B cell (primary cell): ENCODE measurements at regions of chr7 and their contacts with region 1.

Region 1: GRCh38 chr7:151028131-151028947 is at the start of gene ABCB8:
- DNase-seq: peak; percentile 99
- ATAC-seq: peak; percentile 92
- H3K4me3 ChIP-seq: peak within 1 kb of the TSS; percentile 54 to 86 (median 78)
- H3K4me3 Mint-ChIP-seq: peak within 1 kb of the TSS; percentile 97
- H3K27ac ChIP-seq: peak within 1 kb of the TSS; percentile 95 to 96
- H3K27ac Mint-ChIP-seq: peak within 1 kb of the TSS; percentile 99
- H3K4me1 ChIP-seq: peaks cover 11 to 17% of the 10 kb centered on the region in 2 donors
- H3K4me1 Mint-ChIP-seq: peaks cover 23% of the 10 kb centered on the region
- H3K27me3 ChIP-seq: peaks cover 0 to 20% (median 7%) of the 10 kb centered on the region in 4 experiments
- H3K27me3 Mint-ChIP-seq: peaks cover 7% of the 10 kb centered on the region
- CTCF ChIP-seq: peak; percentile 25
- total RNA-seq, gene ABCB8: 64.7 and 69.7 TPM in 2 replicates

Region 2: GRCh38 chr7:149771721-149772240 is 1256.6 kb before region 1 on chr7:
- CTCF ChIA-PET with region 1: no interaction called
- POLR2A ChIA-PET with region 1: no interaction called
- intact Hi-C with region 1: loop called (anchors 5 kb)
- DNase-seq: peak; percentile 89
- ATAC-seq: peak; percentile 97
- H3K4me3 ChIP-seq: peak overlapping the region in 4 of 5 experiments; percentile 53 to 74 (median 64)
- H3K4me3 Mint-ChIP-seq: peak overlapping the region; percentile 78
- H3K27ac ChIP-seq: no peak overlapping the region
- H3K27ac Mint-ChIP-seq: no peak overlapping the region
- H3K4me1 ChIP-seq: peaks cover 7 to 19% of the 10 kb centered on the region in 2 donors
- H3K4me1 Mint-ChIP-seq: peaks cover 9% of the 10 kb centered on the region
- H3K27me3 ChIP-seq: peaks cover 0 to 19% (median 1%) of the 10 kb centered on the region in 4 experiments
- H3K27me3 Mint-ChIP-seq: peaks cover 10% of the 10 kb centered on the region
- CTCF ChIP-seq: no peak

Region 3: DNA sequence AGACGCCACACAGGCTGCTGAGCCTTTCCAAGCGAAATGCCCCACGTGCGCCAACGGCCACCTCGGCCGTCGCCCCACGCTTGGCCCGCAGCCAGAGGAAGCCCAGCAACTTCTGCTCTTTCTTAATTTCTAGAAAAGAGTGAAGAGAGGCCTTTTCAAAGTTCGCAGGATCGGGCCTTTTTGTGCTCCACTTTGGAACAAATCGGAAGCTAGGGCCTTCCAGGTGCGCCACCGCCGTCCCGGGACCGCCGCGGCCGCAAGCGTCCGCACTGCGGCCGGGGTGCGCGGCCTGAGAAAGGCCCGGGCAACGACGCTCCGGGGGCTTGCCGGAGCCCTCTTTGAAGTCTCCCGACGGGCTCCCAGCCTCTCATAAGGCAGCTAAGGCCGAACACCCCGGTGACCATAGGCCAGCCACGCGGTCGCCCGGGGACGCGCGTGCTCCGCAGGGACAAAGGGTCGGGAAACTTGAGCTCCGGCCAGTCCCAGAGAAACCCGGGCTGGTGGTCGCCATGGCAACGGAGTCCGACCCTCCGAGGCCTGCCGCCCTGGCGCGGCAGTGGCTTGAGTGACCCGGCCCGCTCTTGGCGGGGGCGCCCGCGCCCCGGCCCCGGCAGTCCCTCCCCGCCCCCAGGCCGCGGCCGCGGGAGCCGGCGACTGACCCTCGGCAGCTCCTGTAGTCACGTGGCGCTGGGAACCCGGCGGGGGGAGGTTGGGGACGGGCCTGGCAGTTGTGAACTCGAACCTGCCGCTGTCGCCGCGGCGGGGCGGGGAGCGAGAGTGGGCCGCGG is 660.0 kb before region 1 on chr7 and contains the start of gene REPIN1:
- CTCF ChIA-PET with region 1: no interaction called
- POLR2A ChIA-PET with region 1: no interaction called
- intact Hi-C with region 1: loop called (anchors 10 kb)
- DNase-seq: peak; percentile 89
- ATAC-seq: peak; percentile 49
- H3K4me3 ChIP-seq: peak within 1 kb of the TSS; percentile 62 to 98 (median 82)
- H3K4me3 Mint-ChIP-seq: peak within 1 kb of the TSS; percentile 92
- H3K27ac ChIP-seq: peak within 1 kb of the TSS; percentile 98 to 99
- H3K27ac Mint-ChIP-seq: peak within 1 kb of the TSS; percentile 98
- H3K4me1 ChIP-seq: peaks cover 57 to 72% of the 10 kb centered on the region in 2 donors
- H3K4me1 Mint-ChIP-seq: peaks cover 69% of the 10 kb centered on the region
- H3K27me3 ChIP-seq: no peaks in the 10 kb centered on the region
- H3K27me3 Mint-ChIP-seq: no peaks in the 10 kb centered on the region
- CTCF ChIP-seq: no peak
- total RNA-seq, gene REPIN1: 190 and 193 TPM in 2 replicates

Region 4: GRCh38 chr7:150378853-150379440 is 649.4 kb before region 1 on chr7 and contains the start of gene ZNF775:
- CTCF ChIA-PET with region 1: no interaction called
- POLR2A ChIA-PET with region 1: no interaction called
- intact Hi-C with region 1: loop called (anchors 1 kb)
- DNase-seq: peak; percentile 93
- ATAC-seq: peak; percentile 91
- H3K4me3 ChIP-seq: peak within 1 kb of the TSS; percentile 45 to 91 (median 77)
- H3K4me3 Mint-ChIP-seq: peak within 1 kb of the TSS; percentile 96
- H3K27ac ChIP-seq: peak within 1 kb of the TSS; percentile 84 to 85
- H3K27ac Mint-ChIP-seq: peak within 1 kb of the TSS; percentile 90
- H3K4me1 ChIP-seq: peaks cover 22 to 59% of the 10 kb centered on the region in 2 donors
- H3K4me1 Mint-ChIP-seq: peaks cover 71% of the 10 kb centered on the region
- H3K27me3 ChIP-seq: no peaks in the 10 kb centered on the region
- H3K27me3 Mint-ChIP-seq: no peaks in the 10 kb centered on the region
- CTCF ChIP-seq: peak; percentile 14
- total RNA-seq, gene ZNF775: 12.1 and 12.5 TPM in 2 replicates

Region 5: GRCh38 chr7:150675714-150676113 is 352.6 kb before region 1 on chr7:
- CTCF ChIA-PET with region 1: no interaction called
- POLR2A ChIA-PET with region 1: no interaction called
- intact Hi-C with region 1: no loop called
- DNase-seq: no peak
- ATAC-seq: no peak
- H3K4me3 ChIP-seq: no peak overlapping the region
- H3K4me3 Mint-ChIP-seq: no peak overlapping the region
- H3K27ac ChIP-seq: no peak overlapping the region
- H3K27ac Mint-ChIP-seq: no peak overlapping the region
- H3K4me1 ChIP-seq: peaks cover 7 to 14% of the 10 kb centered on the region in 2 donors
- H3K4me1 Mint-ChIP-seq: peaks cover 13% of the 10 kb centered on the region
- H3K27me3 ChIP-seq: no peaks in the 10 kb centered on the region
- H3K27me3 Mint-ChIP-seq: peaks cover 6% of the 10 kb centered on the region
- CTCF ChIP-seq: no peak

Region 6: DNA sequence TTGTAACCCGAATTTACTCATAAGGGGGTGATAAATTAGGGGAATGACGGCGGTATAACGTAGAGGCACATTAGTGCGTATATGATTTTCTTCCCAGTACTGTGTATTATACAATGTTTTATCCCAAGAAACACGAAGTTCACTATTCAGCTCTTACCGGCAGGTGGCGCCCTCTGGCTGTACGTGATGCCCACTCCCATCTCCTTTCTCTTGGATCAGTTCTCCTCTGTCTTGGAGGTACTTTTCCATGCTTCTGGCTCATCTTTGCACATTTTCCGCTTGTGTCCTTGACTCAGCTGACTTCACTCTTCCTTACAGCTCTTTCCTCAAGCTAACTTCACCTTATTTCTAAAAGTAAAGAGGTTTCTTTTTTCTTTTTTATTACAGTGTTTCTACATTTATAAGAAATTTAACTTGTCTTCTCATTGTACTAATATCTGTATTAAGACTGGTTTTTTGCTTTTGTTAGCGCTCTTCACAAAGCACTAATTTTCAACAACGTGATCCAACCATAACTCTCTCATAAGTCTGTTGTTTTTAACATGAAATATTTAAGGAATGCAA is 249.5 kb before region 1 on chr7:
- CTCF ChIA-PET with region 1: no interaction called
- POLR2A ChIA-PET with region 1: no interaction called
- intact Hi-C with region 1: no loop called
- DNase-seq: peak; percentile 70
- ATAC-seq: peak; percentile 49
- H3K4me3 ChIP-seq: no peak overlapping the region
- H3K4me3 Mint-ChIP-seq: no peak overlapping the region
- H3K27ac ChIP-seq: no peak overlapping the region
- H3K27ac Mint-ChIP-seq: no peak overlapping the region
- H3K4me1 ChIP-seq: no peaks in the 10 kb centered on the region
- H3K4me1 Mint-ChIP-seq: no peaks in the 10 kb centered on the region
- H3K27me3 ChIP-seq: no peaks in the 10 kb centered on the region
- H3K27me3 Mint-ChIP-seq: peaks cover 15% of the 10 kb centered on the region
- CTCF ChIP-seq: peak; percentile 98

Region 7: DNA sequence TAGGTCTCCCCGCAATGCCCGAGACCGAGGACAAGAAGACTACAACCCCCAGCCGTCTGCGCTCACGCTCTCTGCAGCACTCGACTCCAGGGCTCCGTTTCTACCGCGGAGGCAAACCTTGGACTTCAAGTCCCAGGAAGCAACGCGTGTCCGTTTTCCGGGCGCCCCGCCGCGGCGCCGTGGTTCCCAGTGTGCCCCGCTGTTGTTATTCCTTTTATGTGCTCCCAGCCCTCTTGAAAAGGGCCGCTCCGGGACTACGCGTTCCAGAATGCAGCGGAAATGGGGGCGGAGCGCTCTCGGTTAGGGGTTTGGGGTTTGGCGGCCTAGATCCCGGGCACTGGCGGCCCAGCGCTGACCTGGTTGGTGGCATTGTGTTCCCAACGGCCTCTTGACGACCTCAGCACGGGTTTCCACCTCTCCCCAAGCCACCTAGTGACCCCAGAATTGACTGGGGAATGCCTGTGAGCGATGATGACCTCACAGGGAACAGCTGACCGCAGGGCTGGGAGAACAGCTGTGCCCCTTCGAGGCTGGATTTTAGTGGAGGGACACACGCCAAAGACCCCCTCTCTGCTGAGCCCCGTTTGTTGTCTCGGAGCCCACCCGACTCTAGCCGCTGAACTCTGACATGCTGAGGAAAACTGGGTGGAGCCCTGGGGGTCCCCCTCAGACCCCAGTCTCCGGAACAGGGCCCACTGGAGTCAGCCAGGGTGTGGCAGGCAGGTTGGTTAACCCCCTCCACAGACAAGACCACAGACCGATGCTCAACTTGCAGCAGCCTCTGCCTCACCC is 29.8 kb after region 1 on chr7:
- CTCF ChIA-PET with region 1: interaction called, 3 read pairs
- POLR2A ChIA-PET with region 1: interaction called, 5 read pairs
- intact Hi-C with region 1: loop called (anchors 1 kb)
- DNase-seq: peak; percentile 98
- ATAC-seq: peak; percentile 92
- H3K4me3 ChIP-seq: peak overlapping the region; percentile 67 to 90 (median 73)
- H3K4me3 Mint-ChIP-seq: peak overlapping the region; percentile 96
- H3K27ac ChIP-seq: peak overlapping the region; percentile 79 to 82
- H3K27ac Mint-ChIP-seq: peak overlapping the region; percentile 94
- H3K4me1 ChIP-seq: peaks cover 23 to 40% of the 10 kb centered on the region in 2 donors
- H3K4me1 Mint-ChIP-seq: peaks cover 36% of the 10 kb centered on the region
- H3K27me3 ChIP-seq: no peaks in the 10 kb centered on the region
- H3K27me3 Mint-ChIP-seq: no peaks in the 10 kb centered on the region
- CTCF ChIP-seq: no peak

Region 8: GRCh38 chr7:151232091-151232916 is 204.0 kb after region 1 on chr7 and contains the start of gene CHPF2:
- CTCF ChIA-PET with region 1: no interaction called
- POLR2A ChIA-PET with region 1: no interaction called
- intact Hi-C with region 1: loop called (anchors 1 kb)
- DNase-seq: peak; percentile 91
- ATAC-seq: peak; percentile 94
- H3K4me3 ChIP-seq: peak within 1 kb of the TSS; percentile 64 to 96 (median 93)
- H3K4me3 Mint-ChIP-seq: peak within 1 kb of the TSS; percentile 99
- H3K27ac ChIP-seq: peak within 1 kb of the TSS; percentile 53 to 68
- H3K27ac Mint-ChIP-seq: peak within 1 kb of the TSS; percentile 97
- H3K4me1 ChIP-seq: peaks cover 22 to 30% of the 10 kb centered on the region in 2 donors
- H3K4me1 Mint-ChIP-seq: peaks cover 43% of the 10 kb centered on the region
- H3K27me3 ChIP-seq: no peaks in the 10 kb centered on the region
- H3K27me3 Mint-ChIP-seq: no peaks in the 10 kb centered on the region
- CTCF ChIP-seq: no peak
- total RNA-seq, gene CHPF2: 39.4 and 44.0 TPM in 2 replicates